ENCODE measurements at regions of chr6 and their contacts with region 1.

Region 1: DNA sequence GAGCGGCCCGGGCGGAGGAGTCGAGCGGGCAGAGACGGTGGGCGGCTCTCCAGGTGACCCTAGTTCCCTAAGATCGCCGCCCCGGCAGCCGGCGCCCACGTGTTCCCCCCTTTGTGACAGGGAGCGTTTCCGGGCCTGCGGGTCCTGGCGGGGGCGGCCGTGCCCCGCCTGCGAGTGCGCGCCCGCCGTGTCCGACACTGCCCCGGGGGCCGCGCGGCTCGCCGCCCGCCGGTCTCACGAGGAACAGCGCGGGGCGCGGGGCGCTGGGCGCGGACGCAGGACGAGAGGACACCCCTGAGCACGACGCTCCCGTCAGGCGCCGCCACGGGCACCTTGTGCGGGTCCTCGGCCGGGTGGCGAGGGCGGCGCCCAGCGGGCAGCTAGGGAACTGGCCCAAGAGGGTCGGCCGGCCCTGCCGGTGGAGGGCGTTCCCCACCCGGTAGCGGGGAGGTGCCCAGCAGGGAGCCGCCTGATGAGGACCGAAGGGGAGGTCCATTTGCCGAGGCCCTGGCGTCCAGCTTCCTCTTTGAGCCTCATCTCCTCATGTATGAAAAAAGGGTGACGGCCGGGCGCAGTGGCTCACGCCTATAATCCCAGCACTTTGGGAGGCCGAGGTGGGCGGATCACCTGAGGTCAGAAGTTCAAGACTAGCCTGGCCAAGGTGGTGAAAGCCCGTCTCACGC is at the start of gene VARS1:
- DNase-seq: peak; percentile 96 to 97 (median 97)
- H3K4me3 ChIP-seq: peak within 1 kb of the TSS; percentile 61 to 98 (median 66)
- H3K4me3 Mint-ChIP-seq: peak within 1 kb of the TSS; percentile 99
- H3K27ac ChIP-seq: peak within 1 kb of the TSS; percentile 72 to 95
- H3K27ac Mint-ChIP-seq: peak within 1 kb of the TSS; percentile 97 to 99 (median 99)
- H3K4me1 ChIP-seq: peaks cover 24 to 30% of the 10 kb centered on the region in 2 donors
- H3K4me1 Mint-ChIP-seq: peaks cover 25% of the 10 kb centered on the region
- H3K27me3 ChIP-seq: no peaks in the 10 kb centered on the region
- H3K27me3 Mint-ChIP-seq: peaks cover 0 to 2% (median 0%) of the 10 kb centered on the region in 3 donors
- CTCF ChIP-seq: peak; percentile 78
- polyA plus RNA-seq, gene VARS1: 22.2 to 28.9 (median 27.3) TPM

Region 2: GRCh38 chr6:31739639-31740396 is 55.9 kb before region 1 on chr6 and contains the start of gene MSH5:
- intact Hi-C with region 1: loop called (anchors 5 to 10 kb)
- DNase-seq: peak; percentile 97 to 100 (median 98)
- H3K4me3 ChIP-seq: peak within 1 kb of the TSS; percentile 58 to 100 (median 71)
- H3K4me3 Mint-ChIP-seq: peak within 1 kb of the TSS; percentile 92 to 98
- H3K27ac ChIP-seq: peak within 1 kb of the TSS; percentile 91 to 99
- H3K27ac Mint-ChIP-seq: peak within 1 kb of the TSS; percentile 95 to 100 (median 99)
- H3K4me1 ChIP-seq: peaks cover 42 to 54% of the 10 kb centered on the region in 2 donors
- H3K4me1 Mint-ChIP-seq: peaks cover 50% of the 10 kb centered on the region
- H3K27me3 ChIP-seq: no peaks in the 10 kb centered on the region
- H3K27me3 Mint-ChIP-seq: peaks cover 0 to 2% (median 2%) of the 10 kb centered on the region in 3 donors
- CTCF ChIP-seq: no peak
- polyA plus RNA-seq, gene MSH5: 0.58 to 31.2 (median 1.9) TPM

Region 3: GRCh38 chr6:31749301-31750065 is 46.3 kb before region 1 on chr6:
- intact Hi-C with region 1: loop called in 1 of 2 experiments (anchors 5 kb)
- DNase-seq: no peak
- H3K4me3 ChIP-seq: no peak overlapping the region
- H3K4me3 Mint-ChIP-seq: no peak overlapping the region
- H3K27ac ChIP-seq: no peak overlapping the region
- H3K27ac Mint-ChIP-seq: peak overlapping the region in 1 of 7 donors; percentile 50
- H3K4me1 ChIP-seq: no peaks in the 10 kb centered on the region
- H3K4me1 Mint-ChIP-seq: no peaks in the 10 kb centered on the region
- H3K27me3 ChIP-seq: no peaks in the 10 kb centered on the region
- H3K27me3 Mint-ChIP-seq: no peaks in the 10 kb centered on the region
- CTCF ChIP-seq: no peak

Region 4: GRCh38 chr6:31769684-31770371 is 25.9 kb before region 1 on chr6:
- intact Hi-C with region 1: loop called in 1 of 2 experiments (anchors 2 kb)
- DNase-seq: peak; percentile 66 to 79 (median 79)
- H3K4me3 ChIP-seq: peak overlapping the region in 1 of 3 experiments; percentile 55
- H3K4me3 Mint-ChIP-seq: no peak overlapping the region
- H3K27ac ChIP-seq: peak overlapping the region; percentile 82 to 88
- H3K27ac Mint-ChIP-seq: peak overlapping the region; percentile 91 to 96 (median 94)
- H3K4me1 ChIP-seq: peaks cover 29 to 30% of the 10 kb centered on the region in 2 donors
- H3K4me1 Mint-ChIP-seq: peaks cover 29% of the 10 kb centered on the region
- H3K27me3 ChIP-seq: no peaks in the 10 kb centered on the region
- H3K27me3 Mint-ChIP-seq: peaks cover 0 to 11% (median 3%) of the 10 kb centered on the region in 3 donors
- CTCF ChIP-seq: peak; percentile 78

Region 5: DNA sequence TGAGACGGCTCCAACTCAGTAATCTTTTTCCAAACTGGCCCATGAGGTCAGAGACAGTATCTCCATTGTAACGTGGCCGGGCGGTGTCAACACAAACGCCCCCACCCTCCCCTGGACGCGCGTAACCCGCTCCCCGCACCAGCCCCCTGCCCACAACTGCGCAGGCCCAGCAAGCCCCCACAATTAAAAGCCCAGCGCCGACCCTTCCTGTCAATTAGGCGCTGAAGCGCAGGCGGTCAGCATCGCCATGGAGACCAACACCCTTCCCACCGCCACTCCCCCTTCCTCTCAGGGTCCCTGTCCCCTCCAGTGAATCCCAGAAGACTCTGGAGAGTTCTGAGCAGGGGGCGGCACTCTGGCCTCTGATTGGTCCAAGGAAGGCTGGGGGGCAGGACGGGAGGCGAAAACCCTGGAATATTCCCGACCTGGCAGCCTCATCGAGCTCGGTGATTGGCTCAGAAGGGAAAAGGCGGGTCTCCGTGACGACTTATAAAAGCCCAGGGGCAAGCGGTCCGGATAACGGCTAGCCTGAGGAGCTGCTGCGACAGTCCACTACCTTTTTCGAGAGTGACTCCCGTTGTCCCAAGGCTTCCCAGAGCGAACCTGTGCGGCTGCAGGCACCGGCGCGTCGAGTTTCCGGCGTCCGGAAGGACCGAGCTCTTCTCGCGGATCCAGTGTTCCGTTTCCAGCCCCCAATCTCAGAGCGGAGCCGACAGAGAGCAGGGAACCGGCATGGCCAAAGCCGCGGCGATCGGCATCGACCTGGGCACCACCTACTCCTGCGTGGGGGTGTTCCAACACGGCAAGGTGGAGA is 19.5 kb after region 1 on chr6 and contains the starts of genes HSPA1A and HSPA1L:
- intact Hi-C with region 1: no loop called
- DNase-seq: peak; percentile 71 to 80 (median 80)
- H3K4me3 ChIP-seq: peak within 1 kb of the TSS; percentile 59 to 94 (median 82)
- H3K4me3 Mint-ChIP-seq: peak within 1 kb of the TSS; percentile 93 to 95
- H3K27ac ChIP-seq: peak within 1 kb of the TSS; percentile 60 to 78
- H3K27ac Mint-ChIP-seq: peak within 1 kb of the TSS; percentile 92 to 98 (median 94)
- H3K4me1 ChIP-seq: peaks cover 41 to 54% of the 10 kb centered on the region in 2 donors
- H3K4me1 Mint-ChIP-seq: peaks cover 47% of the 10 kb centered on the region
- H3K27me3 ChIP-seq: no peaks in the 10 kb centered on the region
- H3K27me3 Mint-ChIP-seq: peaks cover 0 to 3% (median 0%) of the 10 kb centered on the region in 3 donors
- CTCF ChIP-seq: no peak
- polyA plus RNA-seq, gene HSPA1A: 144 to 215 (median 200) TPM
- polyA plus RNA-seq, gene HSPA1L: 0.53 to 0.72 (median 0.55) TPM

Measured in CD14-positive monocyte (primary cell).